Activated CD8-positive, alpha-beta T cell treated with anti-CD3 and anti-CD28 coated beads for 36 hours (primary cell): ENCODE measurements at regions of chr12 and their contacts with region 1.

Region 1: GRCh38 chr12:120292661-120293531 is at the start of gene RNU4-1:
- DNase-seq: peak; percentile 90
- ATAC-seq: peak; percentile 68
- H3K4me3 Mint-ChIP-seq: no peak within 1 kb of the TSS
- H3K27ac Mint-ChIP-seq: no peak within 1 kb of the TSS
- H3K4me1 Mint-ChIP-seq: peaks cover 10% of the 10 kb centered on the region
- H3K27me3 Mint-ChIP-seq: no peaks in the 10 kb centered on the region
- CTCF ChIP-seq: no peak
- total RNA-seq, gene RNU4-1: 692 to 1,025 TPM

Region 2: GRCh38 chr12:120116792-120117651 is 175.9 kb before region 1 on chr12:
- CTCF ChIA-PET with region 1: no interaction called
- POLR2A ChIA-PET with region 1: interaction called, 42 read pairs
- intact Hi-C with region 1: no loop called
- DNase-seq: peak; percentile 96
- ATAC-seq: peak; percentile 83
- H3K4me3 Mint-ChIP-seq: peak overlapping the region; percentile 80
- H3K27ac Mint-ChIP-seq: peak overlapping the region; percentile 86
- H3K4me1 Mint-ChIP-seq: peaks cover 62% of the 10 kb centered on the region
- H3K27me3 Mint-ChIP-seq: no peaks in the 10 kb centered on the region
- CTCF ChIP-seq: no peak

Region 3: GRCh38 chr12:120216742-120217605 is 75.9 kb before region 1 on chr12:
- CTCF ChIA-PET with region 1: no interaction called
- POLR2A ChIA-PET with region 1: interaction called, 394 read pairs
- intact Hi-C with region 1: no loop called
- DNase-seq: no peak
- ATAC-seq: no peak
- H3K4me3 Mint-ChIP-seq: no peak overlapping the region
- H3K27ac Mint-ChIP-seq: no peak overlapping the region
- H3K4me1 Mint-ChIP-seq: no peaks in the 10 kb centered on the region
- H3K27me3 Mint-ChIP-seq: no peaks in the 10 kb centered on the region
- CTCF ChIP-seq: no peak

Region 4: GRCh38 chr12:120234643-120235368 is 58.1 kb before region 1 on chr12:
- CTCF ChIA-PET with region 1: interaction called, 114 read pairs
- POLR2A ChIA-PET with region 1: interaction called, 394 read pairs
- intact Hi-C with region 1: no loop called
- DNase-seq: no peak
- ATAC-seq: no peak
- H3K4me3 Mint-ChIP-seq: no peak overlapping the region
- H3K27ac Mint-ChIP-seq: peak overlapping the region; percentile 13
- H3K4me1 Mint-ChIP-seq: peaks cover 70% of the 10 kb centered on the region
- H3K27me3 Mint-ChIP-seq: no peaks in the 10 kb centered on the region
- CTCF ChIP-seq: no peak

Region 5: GRCh38 chr12:120249875-120250795 is 42.8 kb before region 1 on chr12:
- CTCF ChIA-PET with region 1: no interaction called
- POLR2A ChIA-PET with region 1: interaction called, 136 read pairs
- intact Hi-C with region 1: no loop called
- DNase-seq: peak; percentile 75
- ATAC-seq: peak; percentile 8
- H3K4me3 Mint-ChIP-seq: peak overlapping the region; percentile 6
- H3K27ac Mint-ChIP-seq: peak overlapping the region; percentile 34
- H3K4me1 Mint-ChIP-seq: peaks cover 75% of the 10 kb centered on the region
- H3K27me3 Mint-ChIP-seq: no peaks in the 10 kb centered on the region
- CTCF ChIP-seq: no peak

Region 6: DNA sequence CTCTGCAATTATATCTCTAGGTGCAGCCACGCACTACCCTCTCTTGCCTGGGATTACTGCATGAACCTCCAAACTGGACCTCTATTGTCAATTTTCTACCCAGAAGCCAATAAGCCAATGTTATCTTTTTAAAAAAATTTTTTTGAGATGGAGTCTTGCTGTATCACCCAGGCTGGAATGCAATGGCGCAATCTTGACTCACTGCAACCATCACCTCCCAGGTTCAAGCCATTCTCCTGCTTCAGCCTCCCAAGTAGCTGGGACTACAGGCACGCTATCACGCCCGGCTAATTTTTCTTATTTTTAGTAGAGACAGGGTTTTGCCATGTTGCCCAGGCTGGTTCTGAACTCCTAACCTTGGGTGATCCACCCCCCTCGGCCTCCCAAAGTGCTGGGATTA is 16.2 kb before region 1 on chr12:
- CTCF ChIA-PET with region 1: no interaction called
- POLR2A ChIA-PET with region 1: interaction called, 68 read pairs
- intact Hi-C with region 1: no loop called
- DNase-seq: no peak
- ATAC-seq: no peak
- H3K4me3 Mint-ChIP-seq: no peak overlapping the region
- H3K27ac Mint-ChIP-seq: no peak overlapping the region
- H3K4me1 Mint-ChIP-seq: no peaks in the 10 kb centered on the region
- H3K27me3 Mint-ChIP-seq: no peaks in the 10 kb centered on the region
- CTCF ChIP-seq: no peak

Region 7: DNA sequence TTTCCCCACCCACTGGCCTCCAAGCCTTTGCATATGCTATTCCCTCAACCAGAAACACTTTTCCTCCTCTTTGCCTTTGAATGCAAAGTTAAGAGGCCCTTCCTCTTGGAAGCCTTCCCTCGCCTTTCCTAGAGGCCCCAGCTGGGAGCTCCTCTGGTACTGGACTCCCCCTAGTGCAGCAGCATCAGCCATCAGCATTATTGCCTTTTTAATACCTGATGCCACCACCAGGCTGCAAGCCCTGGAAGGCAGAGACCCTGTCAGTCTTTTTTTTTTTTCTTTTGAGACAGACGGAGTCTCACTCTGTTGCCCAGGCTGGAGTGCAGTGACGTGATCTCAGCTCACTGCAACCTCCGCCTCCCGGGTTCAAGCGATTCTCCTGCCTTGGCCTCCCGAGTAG is 53.8 kb after region 1 on chr12:
- CTCF ChIA-PET with region 1: no interaction called
- POLR2A ChIA-PET with region 1: no interaction called
- intact Hi-C with region 1: no loop called
- DNase-seq: no peak
- ATAC-seq: no peak
- H3K4me3 Mint-ChIP-seq: no peak overlapping the region
- H3K27ac Mint-ChIP-seq: no peak overlapping the region
- H3K4me1 Mint-ChIP-seq: no peaks in the 10 kb centered on the region
- H3K27me3 Mint-ChIP-seq: no peaks in the 10 kb centered on the region
- CTCF ChIP-seq: no peak

Region 8: GRCh38 chr12:120445911-120446843 is 153.3 kb after region 1 on chr12 and contains the starts of genes GATC and TRIAP1:
- CTCF ChIA-PET with region 1: no interaction called
- POLR2A ChIA-PET with region 1: interaction called, 18 read pairs
- intact Hi-C with region 1: no loop called
- DNase-seq: peak; percentile 91
- ATAC-seq: peak; percentile 95
- H3K4me3 Mint-ChIP-seq: peak within 1 kb of the TSS; percentile 94
- H3K27ac Mint-ChIP-seq: peak within 1 kb of the TSS; percentile 97
- H3K4me1 Mint-ChIP-seq: peaks cover 41% of the 10 kb centered on the region
- H3K27me3 Mint-ChIP-seq: no peaks in the 10 kb centered on the region
- CTCF ChIP-seq: no peak
- total RNA-seq, gene GATC: 32.2 to 39.3 TPM
- total RNA-seq, gene TRIAP1: 43.1 to 45.1 TPM